ENCODE measurements at regions of chr6 and their contacts with region 1.

Region 1: GRCh38 chr6:96582436-96582835 is 19.5 kb downstream of the FHL5 start:
- DNase-seq: no peak
- ATAC-seq: no peak
- H3K4me3 ChIP-seq: no peak overlapping the region
- H3K27ac ChIP-seq: peak overlapping the region in 2 of 4 donors; percentile 35 to 48
- H3K4me1 ChIP-seq: no peaks in the 10 kb centered on the region
- H3K27me3 ChIP-seq: no peaks in the 10 kb centered on the region
- CTCF ChIP-seq: no peak
- POLR2A ChIP-seq: no peak

Region 2: DNA sequence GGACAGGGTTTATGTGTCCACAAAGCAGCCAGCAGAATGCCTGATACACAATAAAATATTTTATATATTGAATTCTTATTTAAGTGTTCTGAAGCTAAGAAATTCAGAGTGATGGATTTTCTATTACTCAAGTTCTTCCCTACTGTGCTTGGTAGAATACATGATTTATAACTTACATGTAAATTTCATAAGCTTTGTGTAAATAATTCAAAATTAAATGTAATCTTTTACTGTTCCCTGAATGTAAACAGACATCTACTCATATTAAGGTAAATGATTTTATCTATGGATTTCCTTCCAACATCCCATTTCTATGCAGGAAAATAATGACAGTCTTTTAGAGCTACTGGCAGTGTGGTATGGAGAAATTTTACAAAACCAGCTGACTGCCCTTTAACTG is 541.2 kb before region 1 on chr6:
- in situ Hi-C with region 1: no loop called
- intact Hi-C with region 1: loop called (anchors 5 kb)
- DNase-seq: no peak
- ATAC-seq: no peak
- H3K4me3 ChIP-seq: no peak overlapping the region
- H3K27ac ChIP-seq: no peak overlapping the region
- H3K4me1 ChIP-seq: no peaks in the 10 kb centered on the region
- H3K27me3 ChIP-seq: no peaks in the 10 kb centered on the region
- CTCF ChIP-seq: no peak
- POLR2A ChIP-seq: no peak

Region 3: DNA sequence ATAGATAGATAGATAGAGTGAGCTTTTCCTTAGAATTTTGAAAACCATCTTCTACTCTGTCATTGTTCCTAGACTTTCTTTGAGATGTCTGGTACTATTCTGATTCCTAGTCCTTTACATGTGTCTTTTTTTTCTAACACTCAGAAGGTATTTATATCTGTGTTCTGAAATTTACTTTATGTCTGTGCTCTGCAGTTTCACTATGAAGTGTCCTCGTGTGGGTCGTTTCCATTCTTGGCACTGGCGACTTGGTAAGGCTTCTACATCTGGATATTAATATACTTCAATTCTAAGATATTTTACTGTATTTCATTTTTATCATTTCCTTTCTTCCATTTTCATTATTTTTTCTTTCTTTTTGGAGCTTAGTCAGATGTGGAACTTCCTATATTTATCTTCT is 67.5 kb after region 1 on chr6:
- in situ Hi-C with region 1: no loop called
- intact Hi-C with region 1: no loop called
- DNase-seq: no peak
- ATAC-seq: no peak
- H3K4me3 ChIP-seq: no peak overlapping the region
- H3K27ac ChIP-seq: no peak overlapping the region
- H3K4me1 ChIP-seq: no peaks in the 10 kb centered on the region
- H3K27me3 ChIP-seq: no peaks in the 10 kb centered on the region
- CTCF ChIP-seq: no peak
- POLR2A ChIP-seq: no peak